ENCODE measurements at regions of chr11 and their contacts with region 1.

Region 1: DNA sequence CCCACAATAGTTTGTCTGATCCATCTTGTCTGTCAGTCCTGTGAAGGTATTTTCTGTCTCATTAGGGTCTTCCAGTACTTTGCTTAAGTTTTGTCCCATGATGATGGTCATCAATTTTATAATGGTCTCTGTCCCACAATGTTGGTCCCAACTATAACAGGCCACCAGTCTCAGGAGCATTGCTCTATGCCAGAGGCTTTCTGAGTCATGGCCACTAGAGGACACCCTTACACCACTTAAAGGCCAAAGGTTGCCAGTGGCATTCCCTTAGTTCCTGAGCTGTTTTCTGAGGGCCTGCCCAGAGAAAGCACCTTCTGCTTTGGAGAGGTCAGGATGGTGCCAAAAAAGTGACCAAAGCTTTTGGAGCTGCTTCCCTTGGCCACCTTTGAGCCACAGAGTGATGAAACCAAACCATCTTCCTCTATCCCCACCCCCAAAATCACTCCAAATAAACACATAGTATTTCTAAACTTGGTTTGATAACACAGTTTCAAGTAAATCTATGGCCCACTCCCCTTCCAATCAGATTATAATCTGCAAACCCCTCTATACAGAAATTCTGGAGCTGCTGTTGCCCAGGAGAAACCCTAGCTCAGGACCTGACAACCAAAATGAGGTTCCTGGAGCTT is 19.3 kb downstream of the EIF3F start:
- DNase-seq: peak in 4 of 6 donors; percentile 38 to 76 (median 44)
- ATAC-seq: peak; percentile 90 to 99 (median 97)
- H3K4me3 ChIP-seq: no peak overlapping the region
- H3K27ac ChIP-seq: no peak overlapping the region
- H3K4me1 ChIP-seq: no peaks in the 10 kb centered on the region
- H3K27me3 ChIP-seq: no peaks in the 10 kb centered on the region
- CTCF ChIP-seq: peak in 3 of 4 donors; percentile 57 to 77 (median 75)

Region 2: GRCh38 chr11:8092587-8093424 is 86.3 kb after region 1 on chr11:
- intact Hi-C with region 1: loop called in 2 of 3 experiments (anchors 5 kb)
- DNase-seq: peak in 4 of 6 donors; percentile 59 to 73 (median 68)
- ATAC-seq: peak; percentile 76 to 95 (median 86)
- H3K4me3 ChIP-seq: no peak overlapping the region
- H3K27ac ChIP-seq: no peak overlapping the region
- H3K4me1 ChIP-seq: no peaks in the 10 kb centered on the region
- H3K27me3 ChIP-seq: no peaks in the 10 kb centered on the region
- CTCF ChIP-seq: peak; percentile 27 to 63 (median 40)